Panc1 (cell line): ENCODE measurements at regions of chr1 and their contacts with region 1.

Region 1: GRCh38 chr1:47710329-47711071 is 272.7 kb downstream of the FOXD2 start:
- DNase-seq: peak; percentile 33
- ATAC-seq: peak; percentile 90
- H3K4me3 ChIP-seq: peak overlapping the region; percentile 44 to 56
- H3K27ac ChIP-seq: no peak overlapping the region; the same call in 1 of the 2 replicates
- H3K4me1 ChIP-seq: peaks cover 12% of the 10 kb centered on the region
- H3K27me3 ChIP-seq: peaks cover 2% of the 10 kb centered on the region
- CTCF ChIP-seq: peak; percentile 99

Region 2: DNA sequence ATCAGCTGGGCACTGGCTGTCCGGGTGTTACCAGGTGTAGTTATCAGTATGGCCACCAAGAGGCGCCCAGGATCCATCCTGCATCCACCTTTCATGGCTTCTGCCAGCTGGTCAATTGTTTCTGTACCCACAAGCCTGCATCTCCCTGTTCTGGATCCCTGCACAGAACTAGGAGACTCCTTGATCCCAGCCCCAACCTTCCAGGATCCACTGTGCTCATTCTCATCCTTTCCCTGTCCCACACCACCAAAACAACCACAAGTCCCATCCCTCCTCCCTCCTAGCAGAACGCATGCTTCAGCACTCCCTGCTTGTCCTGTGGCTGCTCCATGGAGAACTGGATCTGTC is 321.6 kb before region 1 on chr1:
- CTCF ChIA-PET with region 1: no interaction called
- POLR2A ChIA-PET with region 1: no interaction called
- in situ Hi-C with region 1: no loop called
- intact Hi-C with region 1: loop called (anchors 5 kb)
- DNase-seq: peak; percentile 66
- ATAC-seq: peak; percentile 94
- H3K4me3 ChIP-seq: no peak overlapping the region
- H3K27ac ChIP-seq: no peak overlapping the region
- H3K4me1 ChIP-seq: no peaks in the 10 kb centered on the region; the same call in 1 of the 2 replicates
- H3K27me3 ChIP-seq: no peaks in the 10 kb centered on the region; the same call in 1 of the 2 replicates
- CTCF ChIP-seq: peak; percentile 94

Region 3: DNA sequence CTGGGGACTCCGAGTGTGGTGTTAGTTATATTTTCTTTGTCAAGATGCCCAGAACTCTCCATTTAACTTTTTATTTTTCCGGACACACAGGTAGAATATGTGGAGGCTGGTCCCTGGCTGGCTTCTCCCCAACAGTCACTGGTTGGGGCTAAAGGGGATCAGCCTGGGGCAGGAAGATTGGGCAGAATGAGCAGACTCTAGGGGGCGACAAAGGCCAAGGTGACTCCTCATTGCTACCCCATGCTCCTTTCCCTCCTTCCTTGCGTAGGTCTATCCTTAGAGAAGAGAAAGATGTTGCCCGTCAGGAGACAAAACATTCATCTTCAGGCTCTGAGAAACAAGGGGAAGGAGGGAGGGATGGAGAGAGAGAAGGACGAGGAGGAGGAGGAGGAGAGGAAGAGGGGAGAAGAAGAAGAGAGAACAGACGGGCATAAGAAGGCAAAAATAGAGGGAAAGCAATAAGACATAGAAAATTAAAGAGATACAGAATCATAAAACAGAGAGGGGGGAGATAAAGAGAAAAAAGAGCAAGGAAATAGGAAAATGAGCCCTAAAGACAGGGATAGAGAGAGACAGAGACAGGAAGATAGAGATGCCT is 182.7 kb before region 1 on chr1:
- CTCF ChIA-PET with region 1: interaction called, 6 read pairs
- POLR2A ChIA-PET with region 1: no interaction called
- in situ Hi-C with region 1: no loop called
- intact Hi-C with region 1: loop called (anchors 5 kb)
- DNase-seq: no peak
- ATAC-seq: peak; percentile 86
- H3K4me3 ChIP-seq: no peak overlapping the region
- H3K27ac ChIP-seq: no peak overlapping the region
- H3K4me1 ChIP-seq: no peaks in the 10 kb centered on the region
- H3K27me3 ChIP-seq: peaks cover 2% of the 10 kb centered on the region; the same call in 1 of the 2 replicates
- CTCF ChIP-seq: peak; percentile 78

Region 4: GRCh38 chr1:47663286-47663685 is 47.2 kb before region 1 on chr1:
- CTCF ChIA-PET with region 1: no interaction called
- POLR2A ChIA-PET with region 1: no interaction called
- in situ Hi-C with region 1: no loop called
- intact Hi-C with region 1: no loop called
- DNase-seq: no peak
- ATAC-seq: no peak
- H3K4me3 ChIP-seq: no peak overlapping the region
- H3K27ac ChIP-seq: no peak overlapping the region
- H3K4me1 ChIP-seq: no peaks in the 10 kb centered on the region
- H3K27me3 ChIP-seq: no peaks in the 10 kb centered on the region
- CTCF ChIP-seq: no peak